ENCODE measurements at regions of chr12 and their contacts with region 1.

Region 1: DNA sequence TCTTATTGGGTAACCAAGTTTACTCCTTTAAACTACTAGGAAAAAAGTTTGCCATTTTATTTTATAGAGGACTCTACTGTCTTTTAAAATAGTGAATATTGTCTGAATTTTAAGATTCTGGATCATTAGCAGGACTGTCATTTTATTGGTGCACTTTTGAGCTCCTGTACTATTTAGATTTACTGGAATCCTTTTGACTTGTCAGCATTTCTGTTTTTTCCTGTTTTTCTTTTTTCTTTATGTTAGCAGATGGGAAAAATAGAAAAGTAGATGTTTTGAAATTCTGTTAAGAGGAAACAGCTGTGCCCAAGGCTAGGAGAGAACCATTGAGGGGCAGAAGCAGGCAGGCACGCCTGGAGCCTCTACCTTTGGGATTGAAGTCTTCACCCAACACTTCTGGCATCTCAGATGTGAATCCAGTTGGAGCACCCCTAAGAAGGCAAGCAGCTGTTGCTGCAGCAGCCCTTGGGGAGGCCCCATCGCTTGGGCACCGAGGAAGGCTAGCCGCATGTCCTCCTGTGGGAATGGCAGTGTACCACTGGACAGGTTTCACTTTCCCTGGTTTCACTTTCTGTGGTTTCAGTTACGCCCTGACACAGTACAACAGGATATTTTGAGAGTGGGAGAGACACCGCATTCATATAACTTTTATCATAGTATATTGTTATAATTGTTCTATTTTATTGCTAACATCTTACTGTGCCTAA is 11.5 kb downstream of the RIMKLB start:
- DNase-seq: no peak
- H3K4me3 ChIP-seq: no peak overlapping the region
- H3K27ac ChIP-seq: no peak overlapping the region
- H3K4me1 ChIP-seq: no peaks in the 10 kb centered on the region
- H3K27me3 ChIP-seq: no peaks in the 10 kb centered on the region
- CTCF ChIP-seq: no peak

Region 2: GRCh38 chr12:8687846-8688601 is 21.3 kb before region 1 on chr12:
- CTCF ChIA-PET with region 1: interaction called, 10 read pairs
- POLR2A ChIA-PET with region 1: no interaction called
- intact Hi-C with region 1: no loop called
- DNase-seq: peak; percentile 59 to 71
- H3K4me3 ChIP-seq: no peak overlapping the region
- H3K27ac ChIP-seq: no peak overlapping the region
- H3K4me1 ChIP-seq: peaks cover 13% of the 10 kb centered on the region; the same call in 1 of the 2 replicates
- H3K27me3 ChIP-seq: no peaks in the 10 kb centered on the region
- CTCF ChIP-seq: no peak

Region 3: DNA sequence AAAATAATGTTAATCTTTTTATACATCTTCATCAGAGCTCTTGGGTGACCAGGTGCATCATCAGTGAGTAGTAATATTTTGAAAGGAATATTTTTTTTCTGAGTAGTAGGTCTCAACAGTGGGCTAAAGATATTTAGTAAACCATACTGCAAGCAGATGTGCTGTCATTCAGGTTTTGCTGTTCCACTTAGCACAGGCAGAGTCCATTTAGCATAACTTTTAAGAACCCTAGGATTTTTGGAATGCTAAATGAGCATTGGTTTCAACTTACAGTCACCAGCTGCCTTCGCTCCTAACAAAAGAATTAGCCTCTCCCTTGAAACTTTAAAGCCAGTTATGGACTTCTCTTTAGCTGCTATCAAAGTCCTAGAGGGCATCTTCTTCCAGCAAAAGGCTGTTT is 13.0 kb after region 1 on chr12:
- CTCF ChIA-PET with region 1: interaction called, 13 read pairs
- POLR2A ChIA-PET with region 1: no interaction called
- intact Hi-C with region 1: no loop called
- DNase-seq: no peak
- H3K4me3 ChIP-seq: no peak overlapping the region
- H3K27ac ChIP-seq: no peak overlapping the region
- H3K4me1 ChIP-seq: no peaks in the 10 kb centered on the region
- H3K27me3 ChIP-seq: no peaks in the 10 kb centered on the region
- CTCF ChIP-seq: no peak

Region 4: DNA sequence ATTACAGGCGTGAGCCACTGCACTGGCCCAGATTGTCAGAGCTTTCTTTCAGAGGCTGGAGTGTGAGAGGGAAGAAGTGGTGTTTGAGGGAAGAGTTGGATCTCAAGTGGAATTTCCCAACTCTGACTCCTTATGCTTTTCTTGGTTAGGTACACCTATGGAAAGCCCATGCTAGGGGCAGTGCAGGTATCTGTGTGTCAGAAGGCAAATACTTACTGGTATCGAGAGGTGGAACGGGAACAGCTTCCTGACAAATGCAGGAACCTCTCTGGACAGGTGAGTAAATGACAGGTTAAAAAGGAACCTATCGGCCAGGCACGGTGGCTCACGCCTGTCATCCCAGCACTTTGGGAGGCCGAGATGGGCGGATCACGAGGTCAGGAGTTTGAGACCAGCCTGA is 128.0 kb after region 1 on chr12:
- CTCF ChIA-PET with region 1: interaction called, 10 read pairs
- POLR2A ChIA-PET with region 1: no interaction called
- intact Hi-C with region 1: no loop called
- DNase-seq: no peak
- H3K4me3 ChIP-seq: no peak overlapping the region
- H3K27ac ChIP-seq: no peak overlapping the region
- H3K4me1 ChIP-seq: no peaks in the 10 kb centered on the region
- H3K27me3 ChIP-seq: no peaks in the 10 kb centered on the region
- CTCF ChIP-seq: no peak